ENCODE measurements at regions of chr1 and their contacts with region 1.

Region 1: GRCh38 chr1:74733604-74734484 is 892 bp downstream of the TYW3 start:
- DNase-seq: peak; percentile 52 to 83 (median 56)
- ATAC-seq: peak; percentile 78
- H3K4me3 ChIP-seq: peak overlapping the region; percentile 59
- H3K27ac ChIP-seq: peak overlapping the region; percentile 92
- H3K4me1 ChIP-seq: peaks cover 5 to 19% of the 10 kb centered on the region in 2 experiments; a peak in 3 of 5 replicates
- H3K27me3 ChIP-seq: no peaks in the 10 kb centered on the region
- CTCF ChIP-seq: peak; percentile 77 to 94 (median 90)
- EP300 ChIP-seq: no peak
- POLR2A ChIP-seq: no peak
- RAD21 ChIP-seq: peak; percentile 64 to 65

Region 2: GRCh38 chr1:74197657-74198552 is 535.9 kb before region 1 on chr1 and contains the starts of genes FPGT and LRRIQ3:
- CTCF ChIA-PET with region 1: no interaction called
- POLR2A ChIA-PET with region 1: no interaction called
- in situ Hi-C with region 1: no loop called
- intact Hi-C with region 1: loop called (anchors 5 kb)
- DNase-seq: peak; percentile 96 to 98 (median 98)
- ATAC-seq: peak; percentile 96
- H3K4me3 ChIP-seq: peak within 1 kb of the TSS; percentile 57
- H3K27ac ChIP-seq: peak within 1 kb of the TSS; percentile 65
- H3K4me1 ChIP-seq: no peaks in the 10 kb centered on the region
- H3K27me3 ChIP-seq: no peaks in the 10 kb centered on the region
- CTCF ChIP-seq: 0 out of 6 replicates have a peak, but pooled peaks of 1 of the 3 experiments have one; percentile 1
- EP300 ChIP-seq: no peak
- POLR2A ChIP-seq: peak; percentile 86
- RAD21 ChIP-seq: no peak
- polyA plus RNA-seq, gene FPGT: 23.5 to 24.3 TPM
- polyA plus RNA-seq, gene LRRIQ3: 2.4 to 2.8 TPM

Region 3: DNA sequence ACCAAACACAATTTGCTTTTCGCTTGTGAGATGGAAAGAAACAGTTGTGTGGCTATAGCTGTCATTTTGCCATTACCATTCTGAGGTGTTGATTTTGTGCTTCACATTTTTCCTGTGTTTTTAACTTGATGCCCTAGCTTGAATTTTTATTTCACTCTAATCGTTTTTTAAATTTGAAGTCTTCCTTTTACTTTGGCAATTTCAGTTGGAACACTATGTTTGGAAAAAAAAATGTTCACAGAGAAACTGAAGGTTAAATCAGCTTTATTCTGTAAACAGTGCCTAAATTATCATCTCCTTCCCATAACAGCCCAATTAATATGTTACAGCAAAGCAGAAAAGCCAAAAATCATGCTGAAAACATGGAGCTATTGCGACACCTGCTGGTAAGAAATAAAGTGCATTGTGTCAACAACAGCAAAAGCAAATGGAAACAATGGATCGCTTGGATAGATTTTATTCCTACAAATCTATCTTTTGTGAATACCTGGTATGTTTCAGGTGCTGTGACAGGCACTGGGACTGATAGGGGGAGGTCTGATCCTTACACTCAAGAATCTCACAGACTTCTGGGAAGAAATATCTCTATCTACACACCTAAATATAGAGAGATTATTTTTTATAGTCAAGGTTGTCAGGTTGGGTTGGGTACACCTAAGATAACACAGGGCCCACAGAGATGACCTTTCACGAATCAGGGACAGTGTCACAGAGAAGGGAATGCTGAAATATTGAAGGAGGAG is 44.1 kb before region 1 on chr1:
- CTCF ChIA-PET with region 1: no interaction called
- POLR2A ChIA-PET with region 1: no interaction called
- in situ Hi-C with region 1: no loop called
- intact Hi-C with region 1: loop called (anchors 2 kb)
- DNase-seq: peak; percentile 17 to 75 (median 23)
- ATAC-seq: peak; percentile 83
- H3K4me3 ChIP-seq: no peak overlapping the region
- H3K27ac ChIP-seq: no peak overlapping the region
- H3K4me1 ChIP-seq: no peaks in the 10 kb centered on the region
- H3K27me3 ChIP-seq: no peaks in the 10 kb centered on the region
- CTCF ChIP-seq: peak; percentile 42 to 83 (median 73); a peak in 5 of 6 replicates
- EP300 ChIP-seq: no peak
- POLR2A ChIP-seq: no peak
- RAD21 ChIP-seq: peak; percentile 66 to 83

Region 4: DNA sequence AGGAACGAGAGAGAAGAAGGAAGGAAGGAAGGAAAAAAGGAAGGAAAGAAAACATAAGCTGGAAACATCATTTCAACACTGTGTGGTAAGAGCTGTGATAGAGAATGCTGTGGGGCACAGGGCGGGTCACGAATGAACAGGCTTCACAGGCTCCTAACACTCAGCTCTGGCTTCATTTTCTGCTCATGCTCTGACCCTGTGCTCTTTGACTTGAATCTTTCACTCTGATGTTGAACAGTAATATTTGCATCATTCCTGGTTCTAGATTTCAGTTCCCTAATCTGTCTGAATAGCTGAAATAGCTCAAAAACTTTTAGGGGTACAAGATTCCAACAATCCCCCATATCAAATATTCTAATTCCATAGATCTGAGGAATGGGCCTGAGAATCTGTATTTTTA is 607.7 kb after region 1 on chr1:
- CTCF ChIA-PET with region 1: no interaction called
- POLR2A ChIA-PET with region 1: no interaction called
- in situ Hi-C with region 1: no loop called
- intact Hi-C with region 1: no loop called
- DNase-seq: no peak
- ATAC-seq: no peak
- H3K4me3 ChIP-seq: no peak overlapping the region
- H3K27ac ChIP-seq: no peak overlapping the region
- H3K4me1 ChIP-seq: peaks cover 0 to 7% of the 10 kb centered on the region in 2 experiments; a peak in 2 of 5 replicates
- H3K27me3 ChIP-seq: no peaks in the 10 kb centered on the region
- CTCF ChIP-seq: no peak
- EP300 ChIP-seq: no peak
- POLR2A ChIP-seq: no peak
- RAD21 ChIP-seq: no peak

Measured in K562 (cell line).